AG04449 (cell line): ENCODE measurements at regions of chr11 and their contacts with region 1.

Region 1: DNA sequence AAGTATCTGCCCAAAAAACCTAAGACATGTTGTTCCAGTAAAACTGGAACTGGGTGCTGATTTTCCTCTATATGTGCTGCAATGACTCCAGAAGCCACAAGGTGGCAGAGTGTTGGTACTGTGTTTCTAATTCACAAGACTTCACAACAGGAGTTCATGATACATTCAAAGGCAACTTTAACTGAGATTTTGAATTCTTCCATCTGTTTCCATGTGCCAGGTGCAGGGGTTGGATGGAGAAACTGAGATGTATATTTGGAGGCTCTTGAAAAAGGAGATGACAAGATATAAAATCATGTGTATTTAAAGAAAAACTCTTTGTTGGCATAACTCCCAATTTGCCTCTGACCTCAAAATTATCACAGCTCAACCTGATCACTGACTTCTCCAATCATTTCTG is 1098.6 kb upstream of the CCDC90B start:
- DNase-seq: peak; percentile 21
- H3K4me3 ChIP-seq: no peak overlapping the region
- CTCF ChIP-seq: peak; percentile 74

Region 2: DNA sequence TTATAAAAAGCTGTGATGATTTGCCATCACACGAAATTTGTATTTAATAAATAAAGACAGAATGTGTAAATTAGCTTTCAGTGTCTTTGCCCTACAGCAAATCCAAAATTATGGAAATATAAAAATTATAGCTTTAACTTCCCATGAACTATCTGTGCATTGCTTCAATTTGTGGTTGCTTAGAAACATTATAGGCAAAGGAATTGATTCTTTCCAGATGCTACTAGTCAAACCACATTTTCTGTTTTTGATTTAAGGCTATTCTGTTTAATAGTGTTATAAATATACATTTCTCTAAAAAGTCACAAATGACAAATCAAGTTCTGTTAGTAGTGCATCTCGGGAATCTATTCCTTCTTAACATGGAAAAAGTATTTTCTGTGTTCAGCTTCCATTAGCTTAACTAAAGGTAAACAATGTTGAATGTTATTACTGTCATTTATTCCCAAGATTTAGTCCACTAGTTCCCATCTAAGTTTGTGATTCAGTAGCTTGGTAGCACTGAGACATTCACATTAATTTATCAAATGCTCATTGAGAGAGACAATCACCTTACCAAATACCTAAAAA is 12.3 kb before region 1 on chr11:
- CTCF ChIA-PET with region 1: interaction called, 14 read pairs
- POLR2A ChIA-PET with region 1: no interaction called
- DNase-seq: no peak
- H3K4me3 ChIP-seq: no peak overlapping the region
- CTCF ChIP-seq: no peak

Region 3: GRCh38 chr11:84398017-84398626 is 13.4 kb after region 1 on chr11:
- CTCF ChIA-PET with region 1: interaction called, 15 read pairs
- POLR2A ChIA-PET with region 1: no interaction called
- DNase-seq: no peak
- H3K4me3 ChIP-seq: no peak overlapping the region
- CTCF ChIP-seq: peak; percentile 36

Region 4: GRCh38 chr11:84437071-84437980 is 52.6 kb after region 1 on chr11:
- CTCF ChIA-PET with region 1: no interaction called
- POLR2A ChIA-PET with region 1: no interaction called
- DNase-seq: no peak
- H3K4me3 ChIP-seq: no peak overlapping the region
- CTCF ChIP-seq: no peak

Region 5: GRCh38 chr11:84524422-84525051 is 139.8 kb after region 1 on chr11:
- CTCF ChIA-PET with region 1: interaction called, 39 read pairs
- POLR2A ChIA-PET with region 1: no interaction called
- DNase-seq: no peak
- H3K4me3 ChIP-seq: no peak overlapping the region
- CTCF ChIP-seq: peak; percentile 40

Region 6: GRCh38 chr11:85076373-85077330 is 691.9 kb after region 1 on chr11:
- CTCF ChIA-PET with region 1: no interaction called
- POLR2A ChIA-PET with region 1: no interaction called
- DNase-seq: no peak
- H3K4me3 ChIP-seq: no peak overlapping the region
- CTCF ChIP-seq: no peak